Tibial artery (tissue), 4 donors: ENCODE measurements at regions of chr3 and their contacts with region 1.

Region 1: GRCh38 chr3:45043728-45044299 is 17.7 kb downstream of the CLEC3B start:
- DNase-seq: no peak
- H3K4me3 ChIP-seq: no peak overlapping the region
- H3K27ac ChIP-seq: peak overlapping the region in 1 of 2 donors; percentile 25
- H3K4me1 ChIP-seq: peaks cover 0 to 6% (median 2%) of the 10 kb centered on the region in 4 donors
- H3K27me3 ChIP-seq: no peaks in the 10 kb centered on the region
- CTCF ChIP-seq: no peak

Region 2: DNA sequence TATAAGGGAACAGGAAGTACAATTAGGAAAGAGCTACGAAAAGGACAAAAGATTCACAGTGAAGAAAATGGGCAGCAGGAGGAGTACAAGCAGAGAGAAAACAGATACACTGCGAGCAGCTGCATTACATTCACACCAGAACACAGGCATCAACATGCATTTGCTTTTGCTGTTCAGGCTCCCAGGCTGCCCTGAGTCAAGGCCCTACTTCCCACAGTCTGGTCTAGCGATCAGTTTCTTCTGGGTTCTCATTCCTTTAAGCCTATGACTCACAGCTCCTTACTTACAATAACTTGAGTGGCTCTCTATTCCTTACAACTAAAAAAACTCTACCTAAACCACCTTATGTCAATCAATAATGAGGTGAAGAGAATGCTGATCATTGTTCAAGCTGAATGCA is 541.8 kb before region 1 on chr3:
- intact Hi-C with region 1: no loop called
- DNase-seq: no peak
- H3K4me3 ChIP-seq: no peak overlapping the region
- H3K27ac ChIP-seq: no peak overlapping the region
- H3K4me1 ChIP-seq: no peaks in the 10 kb centered on the region
- H3K27me3 ChIP-seq: no peaks in the 10 kb centered on the region
- CTCF ChIP-seq: no peak

Region 3: DNA sequence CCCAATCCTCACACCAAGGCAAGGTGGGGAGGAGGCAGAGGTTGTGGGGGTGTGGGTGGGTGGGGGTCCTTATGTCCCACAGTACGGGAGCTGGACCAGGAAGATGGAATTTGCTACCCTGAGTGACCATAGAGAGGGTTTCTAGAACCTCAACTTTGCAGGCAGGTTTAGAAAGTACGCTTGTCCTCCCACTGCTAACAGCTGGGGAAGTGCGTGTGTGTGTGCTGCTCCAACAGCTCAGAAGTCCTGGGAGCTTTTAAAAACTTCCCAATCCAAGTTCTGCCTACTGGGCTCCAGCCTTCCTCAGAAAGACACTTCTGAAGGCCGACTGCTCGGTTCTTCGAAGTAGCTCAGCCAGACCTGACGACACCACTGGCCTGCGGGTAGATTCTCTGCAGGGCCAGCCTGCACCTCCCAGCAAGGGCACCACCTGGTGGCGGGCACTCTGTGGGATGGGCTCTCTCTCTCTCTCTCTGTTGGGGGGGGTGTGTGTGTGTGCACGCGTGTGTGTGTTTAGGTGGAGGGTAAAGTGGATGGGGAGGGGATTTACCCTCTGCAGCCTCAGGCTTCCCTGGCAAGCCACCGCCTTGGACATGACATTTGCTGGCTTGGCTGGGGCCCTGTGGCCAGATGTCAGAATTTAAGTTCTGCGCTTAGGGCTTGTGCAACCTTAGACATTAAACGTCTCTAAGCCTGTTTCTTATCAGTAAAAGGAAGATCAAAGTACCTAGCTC is 166.7 kb after region 1 on chr3:
- intact Hi-C with region 1: loop called (anchors 5 kb)
- DNase-seq: peak; percentile 83
- H3K4me3 ChIP-seq: no peak overlapping the region
- H3K27ac ChIP-seq: no peak overlapping the region
- H3K4me1 ChIP-seq: peaks cover 0 to 6% (median 0%) of the 10 kb centered on the region in 4 donors
- H3K27me3 ChIP-seq: peaks cover 0 to 14% of the 10 kb centered on the region in 2 donors
- CTCF ChIP-seq: peak; percentile 76 to 81